ENCODE measurements at regions of chr2 and their contacts with region 1.

Region 1: GRCh38 chr2:111120253-111121027 is at the start of gene BCL2L11:
- DNase-seq: peak; percentile 98 to 99
- H3K4me3 ChIP-seq: peak within 1 kb of the TSS; percentile 99
- H3K4me3 Mint-ChIP-seq: peak within 1 kb of the TSS; percentile 93
- H3K27ac Mint-ChIP-seq: peak within 1 kb of the TSS; percentile 90
- H3K4me1 ChIP-seq: no peaks in the 10 kb centered on the region
- H3K4me1 Mint-ChIP-seq: peaks cover 11% of the 10 kb centered on the region
- H3K27me3 ChIP-seq: no peaks in the 10 kb centered on the region
- H3K27me3 Mint-ChIP-seq: no peaks in the 10 kb centered on the region
- CTCF ChIP-seq: peak; percentile 25 to 44
- total RNA-seq, gene BCL2L11: 27.7 and 28.9 TPM in 2 replicates

Region 2: DNA sequence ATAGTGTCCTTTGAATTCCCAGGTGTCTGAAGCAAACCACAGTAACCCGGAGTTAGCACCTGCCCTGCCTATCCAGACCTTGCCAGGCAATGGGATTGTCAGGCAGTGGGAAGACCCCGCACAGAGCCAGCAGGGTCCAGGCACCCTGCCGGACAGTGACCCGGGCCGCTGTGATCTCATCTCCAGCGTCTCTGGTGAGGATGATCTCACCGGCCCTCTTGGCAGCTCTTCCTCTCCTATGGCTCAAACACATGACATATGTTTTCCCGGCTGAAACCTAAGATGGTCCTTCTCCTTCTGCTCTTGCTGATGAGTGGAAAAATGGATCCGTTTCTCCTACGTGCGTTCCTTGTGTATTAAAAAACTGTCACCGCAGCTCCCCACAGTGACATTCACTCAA is 312.9 kb before region 1 on chr2:
- CTCF ChIA-PET with region 1: interaction called, 3 read pairs
- POLR2A ChIA-PET with region 1: no interaction called
- intact Hi-C with region 1: loop called (anchors 1 kb)
- DNase-seq: no peak
- H3K4me3 ChIP-seq: no peak overlapping the region
- H3K4me3 Mint-ChIP-seq: no peak overlapping the region
- H3K27ac Mint-ChIP-seq: no peak overlapping the region
- H3K4me1 ChIP-seq: no peaks in the 10 kb centered on the region; the same call in 1 of the 2 replicates
- H3K4me1 Mint-ChIP-seq: no peaks in the 10 kb centered on the region
- H3K27me3 ChIP-seq: no peaks in the 10 kb centered on the region
- H3K27me3 Mint-ChIP-seq: no peaks in the 10 kb centered on the region
- CTCF ChIP-seq: no peak

Region 3: DNA sequence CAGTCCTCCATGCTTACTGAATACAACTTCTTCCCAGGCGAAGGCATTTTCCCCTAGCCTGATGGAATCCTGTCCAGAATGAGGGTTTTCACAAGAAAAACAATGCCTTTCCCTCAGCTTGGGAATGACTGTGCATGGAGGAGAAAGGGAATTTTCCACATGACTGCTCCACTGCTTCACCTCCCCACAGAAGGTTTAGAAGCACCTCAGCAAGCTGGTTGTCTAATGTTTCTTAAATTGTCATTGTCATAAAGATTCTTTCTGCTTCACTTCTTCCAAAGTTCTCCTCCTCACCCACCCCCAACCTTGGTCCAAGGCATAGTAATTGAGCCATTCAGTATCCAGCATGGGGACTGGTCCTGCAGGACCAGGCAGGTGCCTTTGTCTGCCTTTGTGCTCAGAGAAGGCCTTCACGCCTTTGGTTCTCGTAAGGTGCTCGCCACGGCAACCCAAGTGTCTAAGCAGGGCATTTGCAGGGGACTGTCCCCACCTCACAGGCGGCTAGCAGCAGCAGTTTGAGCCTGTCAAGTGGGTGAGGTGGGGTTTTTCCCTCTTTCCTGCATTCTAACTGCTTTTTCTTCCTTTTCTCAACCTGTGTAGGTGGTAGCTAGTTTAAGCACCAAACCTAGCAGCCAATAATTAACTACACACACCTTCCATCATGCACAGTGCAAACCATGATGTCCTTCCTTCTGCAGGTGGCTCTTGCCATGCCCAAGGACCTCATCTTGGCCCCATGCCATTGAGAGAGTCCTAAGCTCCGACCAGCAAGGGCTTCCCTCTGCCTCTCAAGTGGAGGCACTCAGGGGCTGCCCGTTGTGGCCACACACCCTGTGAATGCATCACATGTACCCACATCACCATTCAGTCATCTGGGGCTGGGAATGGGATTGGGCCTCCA is 65.4 kb before region 1 on chr2:
- CTCF ChIA-PET with region 1: no interaction called
- POLR2A ChIA-PET with region 1: no interaction called
- intact Hi-C with region 1: no loop called
- DNase-seq: no peak
- H3K4me3 ChIP-seq: no peak overlapping the region
- H3K4me3 Mint-ChIP-seq: no peak overlapping the region
- H3K27ac Mint-ChIP-seq: no peak overlapping the region
- H3K4me1 ChIP-seq: peaks cover 11% of the 10 kb centered on the region
- H3K4me1 Mint-ChIP-seq: peaks cover 10% of the 10 kb centered on the region
- H3K27me3 ChIP-seq: no peaks in the 10 kb centered on the region
- H3K27me3 Mint-ChIP-seq: peaks cover 2% of the 10 kb centered on the region
- CTCF ChIP-seq: no peak

Region 4: GRCh38 chr2:111106706-111107105 is 13.7 kb before region 1 on chr2:
- CTCF ChIA-PET with region 1: no interaction called
- POLR2A ChIA-PET with region 1: no interaction called
- intact Hi-C with region 1: no loop called
- DNase-seq: no peak
- H3K4me3 ChIP-seq: no peak overlapping the region
- H3K4me3 Mint-ChIP-seq: no peak overlapping the region
- H3K27ac Mint-ChIP-seq: no peak overlapping the region
- H3K4me1 ChIP-seq: no peaks in the 10 kb centered on the region
- H3K4me1 Mint-ChIP-seq: no peaks in the 10 kb centered on the region
- H3K27me3 ChIP-seq: no peaks in the 10 kb centered on the region
- H3K27me3 Mint-ChIP-seq: peaks cover 7% of the 10 kb centered on the region
- CTCF ChIP-seq: no peak

Region 5: DNA sequence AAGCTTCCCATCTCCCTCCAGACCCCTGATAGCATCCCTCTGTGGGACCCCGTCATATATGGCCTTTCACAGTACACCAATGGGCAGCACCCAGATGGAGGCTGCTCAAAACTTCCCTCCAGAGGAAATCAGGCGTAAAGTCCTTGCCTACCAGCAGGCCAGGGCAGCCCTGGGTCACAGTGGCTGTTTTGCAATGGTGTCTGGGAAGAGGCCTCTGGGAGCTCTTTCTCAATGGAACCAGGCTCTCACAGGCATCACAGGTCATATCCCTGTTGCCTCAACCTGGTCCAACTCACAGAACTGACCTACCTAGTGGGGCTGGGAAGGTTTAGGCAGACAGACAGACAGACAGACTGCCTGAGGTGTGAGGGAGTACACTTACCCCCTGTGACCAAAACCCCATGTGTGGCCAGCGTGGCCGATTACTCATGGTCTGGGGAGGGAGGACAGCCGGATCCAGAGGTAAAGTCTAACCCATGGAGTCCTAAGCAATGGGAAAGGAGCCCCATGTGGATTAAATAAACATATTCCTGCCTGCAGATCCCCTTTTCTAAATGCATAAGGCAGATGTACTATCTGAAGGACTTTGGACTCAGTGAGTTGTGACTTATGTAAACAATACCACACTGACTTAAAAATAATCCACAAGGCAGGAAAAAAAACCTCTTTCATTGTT is 58.4 kb after region 1 on chr2:
- CTCF ChIA-PET with region 1: no interaction called
- POLR2A ChIA-PET with region 1: no interaction called
- intact Hi-C with region 1: loop called (anchors 5 kb)
- DNase-seq: peak; percentile 55 to 59
- H3K4me3 ChIP-seq: no peak overlapping the region
- H3K4me3 Mint-ChIP-seq: no peak overlapping the region
- H3K27ac Mint-ChIP-seq: peak overlapping the region; percentile 42
- H3K4me1 ChIP-seq: peaks cover 29% of the 10 kb centered on the region
- H3K4me1 Mint-ChIP-seq: peaks cover 16% of the 10 kb centered on the region
- H3K27me3 ChIP-seq: no peaks in the 10 kb centered on the region
- H3K27me3 Mint-ChIP-seq: no peaks in the 10 kb centered on the region
- CTCF ChIP-seq: no peak

Region 6: DNA sequence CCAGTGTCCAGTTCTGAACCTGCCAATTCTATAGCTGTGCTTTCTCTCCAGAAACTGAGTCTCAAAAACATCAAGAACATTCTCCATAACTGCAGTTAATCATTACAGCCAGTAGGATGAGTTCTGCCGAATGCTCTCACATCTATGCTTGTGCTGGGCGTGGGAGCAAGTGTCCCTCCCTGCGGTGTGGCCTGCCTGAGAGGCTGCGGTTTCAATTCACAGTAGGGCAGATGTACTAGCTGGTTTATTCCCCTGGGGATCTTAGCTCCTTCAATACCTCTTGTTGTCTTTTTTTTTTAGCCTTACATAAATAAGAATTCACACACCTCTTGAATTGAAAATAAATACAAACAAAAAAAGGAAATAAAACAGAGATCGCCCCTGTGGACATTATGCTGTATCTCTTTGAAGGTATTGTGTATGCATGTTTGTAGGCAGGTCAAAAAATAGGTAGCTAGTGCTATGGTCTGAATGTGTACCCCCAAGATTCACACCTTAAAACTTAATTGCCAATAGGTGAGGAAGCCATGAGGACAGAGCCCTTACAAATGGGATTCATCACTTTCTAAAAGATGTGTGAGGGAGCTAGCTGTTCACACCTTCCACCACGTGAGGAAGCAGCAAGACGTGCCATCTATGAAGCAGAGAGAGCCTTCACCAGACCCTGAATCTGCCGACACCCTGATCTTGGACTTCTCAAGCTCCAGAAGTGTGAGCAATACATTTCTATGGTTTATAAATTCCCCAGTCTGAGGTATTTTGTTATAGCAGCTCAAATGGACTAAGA is 74.6 kb after region 1 on chr2:
- CTCF ChIA-PET with region 1: interaction called, 3 read pairs
- POLR2A ChIA-PET with region 1: interaction called, 5 read pairs
- intact Hi-C with region 1: loop called (anchors 5 kb)
- DNase-seq: peak in 1 of 2 experiments; percentile 34
- H3K4me3 ChIP-seq: no peak overlapping the region
- H3K4me3 Mint-ChIP-seq: no peak overlapping the region
- H3K27ac Mint-ChIP-seq: no peak overlapping the region
- H3K4me1 ChIP-seq: peaks cover 24% of the 10 kb centered on the region
- H3K4me1 Mint-ChIP-seq: peaks cover 14% of the 10 kb centered on the region
- H3K27me3 ChIP-seq: no peaks in the 10 kb centered on the region
- H3K27me3 Mint-ChIP-seq: no peaks in the 10 kb centered on the region
- CTCF ChIP-seq: peak in 1 of 2 experiments; percentile 32

Region 7: GRCh38 chr2:111667542-111668273 is 547.3 kb after region 1 on chr2:
- CTCF ChIA-PET with region 1: no interaction called
- POLR2A ChIA-PET with region 1: no interaction called
- intact Hi-C with region 1: loop called (anchors 2 kb)
- DNase-seq: peak; percentile 54 to 69
- H3K4me3 ChIP-seq: no peak overlapping the region
- H3K4me3 Mint-ChIP-seq: no peak overlapping the region
- H3K27ac Mint-ChIP-seq: no peak overlapping the region
- H3K4me1 ChIP-seq: peaks cover 13% of the 10 kb centered on the region
- H3K4me1 Mint-ChIP-seq: peaks cover 11% of the 10 kb centered on the region
- H3K27me3 ChIP-seq: no peaks in the 10 kb centered on the region
- H3K27me3 Mint-ChIP-seq: no peaks in the 10 kb centered on the region
- CTCF ChIP-seq: peak; percentile 41 to 55

Region 8: DNA sequence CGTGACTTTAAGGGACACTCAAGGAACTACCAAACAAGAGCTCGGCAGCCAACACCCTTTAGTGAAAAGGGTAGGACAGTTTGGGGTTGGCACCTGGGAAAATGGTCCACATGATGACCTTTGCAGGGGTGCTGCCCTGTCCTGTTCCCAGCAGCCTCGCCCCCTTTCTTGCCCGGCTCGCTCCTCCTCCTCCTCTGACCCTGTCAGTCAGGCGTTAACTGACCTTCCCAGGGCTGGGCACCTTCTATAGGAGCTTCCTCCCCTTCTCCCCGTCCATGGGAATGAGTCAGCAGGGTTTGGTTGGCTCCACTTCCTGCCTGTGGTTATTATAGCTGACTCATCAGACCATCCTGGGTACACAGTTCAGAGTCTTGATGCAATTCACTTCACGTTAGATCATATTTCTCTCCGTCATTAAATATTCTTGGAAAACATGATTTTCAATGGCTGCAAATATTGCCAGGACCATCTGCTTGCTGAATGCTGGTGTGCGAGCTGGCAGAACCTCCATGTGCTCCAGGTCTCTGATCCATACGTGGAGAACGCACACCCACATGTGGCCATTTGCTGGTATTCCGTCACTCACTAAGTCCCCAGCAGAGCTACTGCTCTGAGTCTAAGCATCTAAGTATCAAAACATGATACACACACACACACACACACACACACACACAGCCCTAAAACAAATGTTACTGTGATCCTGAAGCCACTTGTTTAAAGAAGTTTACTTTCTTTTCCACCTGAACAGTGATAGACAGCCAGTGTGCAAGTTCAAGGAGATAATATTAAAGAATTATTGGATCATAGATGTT is 578.5 kb after region 1 on chr2:
- CTCF ChIA-PET with region 1: no interaction called
- POLR2A ChIA-PET with region 1: no interaction called
- intact Hi-C with region 1: loop called (anchors 5 kb)
- DNase-seq: peak; percentile 44 to 72
- H3K4me3 ChIP-seq: no peak overlapping the region
- H3K4me3 Mint-ChIP-seq: peak overlapping the region; percentile 34
- H3K27ac Mint-ChIP-seq: peak overlapping the region; percentile 57
- H3K4me1 ChIP-seq: peaks cover 15% of the 10 kb centered on the region
- H3K4me1 Mint-ChIP-seq: peaks cover 16% of the 10 kb centered on the region
- H3K27me3 ChIP-seq: no peaks in the 10 kb centered on the region
- H3K27me3 Mint-ChIP-seq: no peaks in the 10 kb centered on the region
- CTCF ChIP-seq: peak in 1 of 2 experiments; percentile 39